AG04450 (cell line): ENCODE measurements at regions of chr6 and their contacts with region 1.

Region 1: GRCh38 chr6:32868257-32868788 is 14.3 kb downstream of the PSMB9 start:
- DNase-seq: no peak
- H3K4me3 ChIP-seq: no peak overlapping the region
- H3K27ac ChIP-seq: no peak overlapping the region
- H3K27me3 ChIP-seq: peaks cover 20% of the 10 kb centered on the region
- CTCF ChIP-seq: peak; percentile 89

Region 2: DNA sequence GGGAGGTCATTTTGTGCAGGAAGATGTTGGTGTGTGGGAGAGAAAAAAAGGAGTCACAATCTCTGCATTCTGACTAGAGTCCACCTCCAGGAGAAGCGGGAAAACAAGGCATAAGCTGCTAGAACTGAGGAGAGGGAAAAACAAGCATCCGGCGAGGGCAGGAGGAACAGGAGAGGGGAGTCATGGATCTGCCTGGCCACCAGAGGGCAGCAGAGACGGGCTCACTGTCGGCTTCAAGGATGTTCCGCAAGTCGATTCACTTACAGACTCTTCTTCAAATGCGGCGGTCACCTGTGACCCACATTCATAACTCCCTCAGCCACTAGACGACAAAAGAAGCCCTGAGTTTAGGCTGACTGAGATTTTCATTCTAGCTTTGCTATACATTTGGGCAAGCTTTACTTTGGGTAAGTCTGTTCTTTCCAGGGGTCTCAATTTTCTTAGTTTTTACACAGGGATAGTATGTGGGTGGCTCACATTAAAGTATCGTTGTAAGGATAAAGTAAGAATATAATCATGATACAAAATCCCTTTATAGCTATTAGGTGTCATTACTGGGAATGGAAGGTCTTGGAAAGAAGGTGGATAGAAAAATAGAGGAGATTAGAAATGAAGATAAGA is 454.8 kb before region 1 on chr6:
- CTCF ChIA-PET with region 1: interaction called, 53 read pairs
- POLR2A ChIA-PET with region 1: no interaction called
- DNase-seq: peak; percentile 57
- H3K4me3 ChIP-seq: no peak overlapping the region
- H3K27ac ChIP-seq: no peak overlapping the region
- H3K27me3 ChIP-seq: peaks cover 6% of the 10 kb centered on the region
- CTCF ChIP-seq: peak; percentile 95

Region 3: DNA sequence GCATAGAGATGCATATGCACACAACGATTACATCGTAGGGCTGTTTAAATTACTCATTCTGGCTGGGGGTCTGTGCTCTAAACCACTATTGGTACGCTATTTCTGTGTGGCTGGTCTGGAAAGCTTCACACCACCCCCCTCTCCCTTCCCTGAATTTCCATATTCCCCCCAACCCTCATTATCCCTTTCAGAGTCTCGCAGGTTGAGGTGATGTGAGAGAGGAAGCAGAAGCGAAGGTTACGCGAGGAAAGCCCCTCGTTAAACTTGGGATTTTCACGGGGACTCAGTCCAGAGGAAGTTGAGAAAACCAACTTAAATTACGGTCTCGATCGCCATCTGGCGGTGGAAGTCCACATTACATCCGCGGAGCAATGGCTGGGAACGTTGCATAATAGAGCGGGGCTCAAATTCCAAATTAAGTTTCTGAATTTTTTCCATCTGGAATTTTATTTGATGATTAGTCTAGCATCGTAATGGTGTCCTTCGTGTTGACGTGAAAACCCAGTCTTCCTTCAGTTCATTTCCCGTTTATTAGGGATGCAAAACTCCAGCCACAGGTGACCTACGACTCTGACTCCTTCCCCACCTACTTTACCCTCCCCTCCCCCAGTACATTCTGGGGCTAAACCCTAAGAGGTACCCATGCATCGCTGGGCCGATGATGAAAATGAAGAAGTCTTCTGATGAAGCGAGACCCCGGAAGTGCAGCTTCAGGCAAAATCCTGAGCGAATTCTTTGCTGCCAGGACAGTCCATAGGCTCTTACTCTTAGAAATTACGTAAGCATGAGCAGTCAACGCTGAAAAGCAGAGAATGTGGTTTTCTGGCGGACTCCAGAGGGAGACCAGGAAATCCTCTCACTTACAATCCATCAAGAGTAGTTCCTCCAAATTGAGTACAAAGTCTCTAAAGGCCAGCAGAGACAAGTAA is 71.2 kb before region 1 on chr6:
- CTCF ChIA-PET with region 1: interaction called, 26 read pairs
- POLR2A ChIA-PET with region 1: no interaction called
- DNase-seq: no peak
- H3K4me3 ChIP-seq: peak overlapping the region; percentile 47
- H3K27ac ChIP-seq: no peak overlapping the region
- H3K27me3 ChIP-seq: peaks cover 13% of the 10 kb centered on the region
- CTCF ChIP-seq: peak; percentile 77

Region 4: DNA sequence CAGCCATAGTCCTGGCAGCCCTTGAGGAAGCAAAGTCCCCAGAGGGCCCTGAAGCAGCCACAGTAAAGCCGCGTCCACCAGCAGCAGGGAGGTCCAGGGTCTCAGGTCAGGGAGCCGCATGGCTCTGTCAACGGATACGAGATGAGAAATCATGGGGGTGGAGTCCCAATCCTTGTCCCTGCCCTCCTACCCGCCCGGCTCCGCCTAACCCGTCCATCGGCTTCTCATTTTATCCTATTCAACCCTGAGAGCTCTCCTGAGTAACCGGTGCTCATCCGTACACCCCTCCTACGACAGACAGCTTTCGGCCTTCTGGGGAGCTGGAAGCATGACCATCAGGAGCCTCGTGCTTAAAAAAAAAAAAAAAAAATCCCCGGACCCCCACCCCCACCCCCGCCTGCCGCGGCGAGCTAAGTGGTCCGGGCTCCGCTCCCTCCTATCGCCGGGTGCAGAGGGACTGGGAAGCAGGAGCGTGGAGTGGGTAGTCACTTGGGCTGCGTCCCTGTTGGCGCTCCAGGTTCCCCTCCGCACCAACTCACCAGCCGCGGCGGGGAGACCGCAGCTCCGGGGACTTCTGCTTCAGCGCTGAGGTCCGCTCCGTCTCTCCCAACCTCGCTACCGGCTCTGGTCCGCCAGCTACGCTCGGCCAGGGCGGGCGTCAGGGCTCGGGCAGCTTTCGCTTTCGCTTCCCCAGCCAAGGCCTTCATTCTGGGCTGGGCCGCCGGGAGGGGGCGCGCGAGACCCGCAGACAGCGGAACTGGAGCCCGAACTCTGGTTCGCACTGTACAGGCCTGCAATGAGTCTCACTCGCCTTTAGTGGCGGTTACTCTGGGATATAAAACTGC is 30.0 kb before region 1 on chr6 and contains the start of gene TAP2:
- CTCF ChIA-PET with region 1: interaction called, 271 read pairs
- POLR2A ChIA-PET with region 1: interaction called, 5 read pairs
- DNase-seq: peak; percentile 74
- H3K4me3 ChIP-seq: peak within 1 kb of the TSS; percentile 92
- H3K27ac ChIP-seq: peak within 1 kb of the TSS; percentile 92
- H3K27me3 ChIP-seq: no peaks in the 10 kb centered on the region
- CTCF ChIP-seq: peak; percentile 96
- polyA plus RNA-seq, gene TAP2: 15.3 and 15.4 TPM in 2 replicates

Region 5: GRCh38 chr6:32879691-32880090 is 11.4 kb after region 1 on chr6:
- CTCF ChIA-PET with region 1: interaction called, 59 read pairs
- POLR2A ChIA-PET with region 1: no interaction called
- DNase-seq: no peak
- H3K4me3 ChIP-seq: no peak overlapping the region
- H3K27ac ChIP-seq: no peak overlapping the region
- H3K27me3 ChIP-seq: peaks cover 27% of the 10 kb centered on the region
- CTCF ChIP-seq: no peak

Region 6: DNA sequence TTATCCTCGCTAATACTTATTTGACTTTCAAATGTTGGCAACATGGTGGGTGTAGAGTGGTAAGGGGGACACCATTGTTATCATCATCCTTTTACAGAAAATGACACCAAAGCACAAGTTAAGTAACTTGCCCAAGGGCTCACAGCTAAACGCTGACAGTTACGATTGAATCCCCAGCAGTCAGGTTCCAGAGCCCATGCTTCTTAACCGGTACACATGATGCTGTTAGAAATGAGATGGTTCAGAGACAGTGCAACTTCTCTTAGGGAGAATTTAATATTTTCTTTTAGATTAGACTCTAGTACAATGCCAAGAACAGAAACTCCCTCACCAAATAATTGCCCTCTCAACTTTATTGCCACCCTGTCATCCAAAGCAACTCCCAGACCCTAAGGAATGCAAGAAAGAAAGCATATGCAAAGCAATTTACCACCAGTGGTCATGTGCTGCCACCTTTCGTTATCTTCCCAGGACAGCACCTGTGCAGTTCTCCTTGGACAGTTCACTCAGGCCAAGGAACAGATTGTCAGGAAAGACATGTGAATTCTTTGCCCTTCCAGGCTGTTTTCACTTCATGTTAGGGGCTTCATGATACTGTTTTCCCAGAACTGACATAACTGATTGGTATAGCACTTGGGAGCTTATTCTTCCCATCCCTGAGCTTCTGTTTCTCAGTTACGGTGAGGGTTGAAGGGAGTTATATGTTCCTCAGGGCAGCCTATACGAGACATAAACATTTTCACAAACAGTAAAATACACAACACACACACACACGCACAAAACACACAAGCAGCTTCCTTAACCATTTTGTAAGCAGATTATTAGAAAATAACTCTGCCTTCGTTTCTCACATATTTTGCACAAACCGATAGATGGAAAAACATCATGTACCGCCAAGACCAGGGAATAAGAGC is 79.5 kb after region 1 on chr6:
- CTCF ChIA-PET with region 1: interaction called, 23 read pairs
- POLR2A ChIA-PET with region 1: no interaction called
- DNase-seq: no peak
- H3K4me3 ChIP-seq: no peak overlapping the region
- H3K27ac ChIP-seq: no peak overlapping the region
- H3K27me3 ChIP-seq: no peaks in the 10 kb centered on the region
- CTCF ChIP-seq: peak; percentile 56